ENCODE measurements at regions of chr7 and their contacts with region 1.

Region 1: GRCh38 chr7:98359395-98359794 is 41.5 kb downstream of the BAIAP2L1 start:
- DNase-seq: no peak
- ATAC-seq: peak in 3 of 8 donors; percentile 33 to 54 (median 33)
- H3K4me3 ChIP-seq: no peak overlapping the region
- H3K27ac ChIP-seq: no peak overlapping the region
- H3K4me1 ChIP-seq: peaks cover 0 to 18% (median 7%) of the 10 kb centered on the region in 9 donors
- H3K27me3 ChIP-seq: no peaks in the 10 kb centered on the region
- CTCF ChIP-seq: no peak

Region 2: DNA sequence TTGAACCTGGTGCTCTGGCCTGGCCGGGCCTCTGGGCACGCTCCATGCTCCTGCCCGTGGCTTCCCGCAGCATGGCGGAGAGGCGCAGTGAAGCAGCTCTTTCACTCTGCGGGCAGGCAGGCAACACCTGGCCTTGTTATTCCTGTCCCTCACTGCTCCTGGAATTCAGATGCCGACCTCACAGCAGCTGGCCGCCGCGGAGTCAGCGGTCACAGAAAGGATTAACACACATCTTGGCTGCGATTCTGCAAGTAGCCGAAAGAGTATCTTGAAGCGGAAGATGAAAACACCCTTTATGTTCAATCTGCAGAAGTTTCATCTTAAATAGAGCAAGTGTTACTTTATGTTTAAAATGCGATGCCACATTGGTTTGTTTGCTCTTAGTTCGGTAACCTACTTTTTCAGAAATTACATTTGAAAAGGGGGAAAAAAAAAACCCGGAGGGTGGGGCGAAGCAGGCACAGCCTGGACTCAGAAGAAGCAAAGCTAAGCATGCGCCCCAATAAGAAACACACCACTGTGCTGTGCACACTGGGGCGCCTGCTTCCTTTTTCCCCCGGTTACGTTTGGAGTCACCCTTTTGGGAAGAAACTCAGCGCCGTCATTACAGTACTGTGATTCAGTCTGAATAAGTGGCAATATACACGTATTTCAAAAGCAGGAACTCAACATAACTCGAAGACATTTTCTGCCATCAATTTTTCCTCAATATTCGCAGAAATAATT is 35.6 kb before region 1 on chr7:
- intact Hi-C with region 1: loop called in 2 of 10 experiments (anchors 1 to 2 kb)
- DNase-seq: no peak
- ATAC-seq: no peak
- H3K4me3 ChIP-seq: peak overlapping the region in 4 of 10 donors; percentile 1 to 18 (median 10)
- H3K27ac ChIP-seq: no peak overlapping the region
- H3K4me1 ChIP-seq: peaks cover 0 to 21% (median 5%) of the 10 kb centered on the region in 9 donors
- H3K27me3 ChIP-seq: peaks cover 0 to 16% (median 3%) of the 10 kb centered on the region in 7 donors
- CTCF ChIP-seq: no peak

Measured in heart right ventricle (tissue), 16 donors.